Activated CD8-positive, alpha-beta T cell treated with anti-CD3 and anti-CD28 coated beads, Interleukin-2, amount 10 ng/mL, durations not matched to agents 7 days and 5 days (primary cell): ENCODE measurements at regions of chr17 and their contacts with region 1.

Region 1: GRCh38 chr17:6651357-6651918 is at the starts of genes C17orf100 and MED31:
- DNase-seq: peak; percentile 96
- ATAC-seq: peak; percentile 93
- H3K4me3 Mint-ChIP-seq: peak within 1 kb of the TSS; percentile 97
- H3K27ac Mint-ChIP-seq: peak within 1 kb of the TSS; percentile 98
- H3K4me1 Mint-ChIP-seq: peaks cover 54% of the 10 kb centered on the region
- H3K27me3 Mint-ChIP-seq: peaks cover 21% of the 10 kb centered on the region
- total RNA-seq, gene C17orf100: 0.92 to 1.5 TPM
- total RNA-seq, gene MED31: 16.9 to 20.2 TPM

Region 2: GRCh38 chr17:6473128-6473767 is 178.2 kb before region 1 on chr17:
- CTCF ChIA-PET with region 1: interaction called, 24 read pairs
- POLR2A ChIA-PET with region 1: interaction called, 5 read pairs
- DNase-seq: peak; percentile 75
- ATAC-seq: peak; percentile 80
- H3K4me3 Mint-ChIP-seq: no peak overlapping the region
- H3K27ac Mint-ChIP-seq: no peak overlapping the region
- H3K4me1 Mint-ChIP-seq: no peaks in the 10 kb centered on the region
- H3K27me3 Mint-ChIP-seq: no peaks in the 10 kb centered on the region

Region 3: DNA sequence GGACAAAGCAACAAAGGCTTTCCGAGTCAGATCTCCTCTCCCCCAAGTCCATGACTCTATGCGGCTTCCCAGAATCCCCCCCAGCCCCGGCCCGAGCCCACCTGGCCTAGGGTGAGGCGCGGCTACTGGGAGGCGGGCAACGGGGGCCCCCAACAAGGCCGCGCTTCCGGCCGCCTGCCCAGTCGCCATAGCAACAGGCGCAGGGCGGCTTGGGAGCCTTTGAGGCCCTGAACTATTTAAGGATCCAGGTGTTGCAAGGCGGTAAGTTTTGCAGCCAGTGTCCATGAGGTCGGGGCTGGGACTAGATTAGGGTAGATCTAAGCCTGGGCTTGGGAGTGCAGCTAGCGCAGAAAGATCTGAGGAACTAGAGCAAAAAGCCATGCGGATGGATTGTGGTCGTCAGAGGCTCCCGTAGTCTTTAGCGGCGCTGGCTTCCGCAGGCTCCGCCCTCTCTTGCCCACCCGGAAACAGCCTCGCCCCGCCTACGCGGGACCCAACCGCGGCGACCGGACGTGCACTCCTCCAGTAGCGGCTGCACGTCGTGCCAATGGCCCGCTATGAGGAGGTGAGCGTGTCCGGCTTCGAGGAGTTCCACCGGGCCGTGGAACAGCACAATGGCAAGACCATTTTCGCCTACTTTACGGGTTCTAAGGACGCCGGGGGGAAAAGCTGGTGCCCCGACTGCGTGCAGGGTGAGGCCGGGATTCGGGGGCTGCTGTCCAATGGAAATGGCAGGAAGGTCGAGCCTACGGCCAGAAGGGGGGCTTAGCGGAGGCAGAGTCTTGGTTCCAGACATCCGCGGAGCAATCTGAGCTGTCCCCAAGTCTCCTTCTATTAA is 10.7 kb before region 1 on chr17 and contains the starts of genes KIAA0753 and TXNDC17:
- CTCF ChIA-PET with region 1: interaction called, 11 read pairs
- POLR2A ChIA-PET with region 1: interaction called, 36 read pairs
- DNase-seq: peak; percentile 95
- ATAC-seq: peak; percentile 86
- H3K4me3 Mint-ChIP-seq: peak within 1 kb of the TSS; percentile 94
- H3K27ac Mint-ChIP-seq: peak within 1 kb of the TSS; percentile 98
- H3K4me1 Mint-ChIP-seq: peaks cover 61% of the 10 kb centered on the region
- H3K27me3 Mint-ChIP-seq: no peaks in the 10 kb centered on the region
- total RNA-seq, gene KIAA0753: 14.0 to 19.5 TPM
- total RNA-seq, gene TXNDC17: 81.8 to 94.7 TPM

Region 4: DNA sequence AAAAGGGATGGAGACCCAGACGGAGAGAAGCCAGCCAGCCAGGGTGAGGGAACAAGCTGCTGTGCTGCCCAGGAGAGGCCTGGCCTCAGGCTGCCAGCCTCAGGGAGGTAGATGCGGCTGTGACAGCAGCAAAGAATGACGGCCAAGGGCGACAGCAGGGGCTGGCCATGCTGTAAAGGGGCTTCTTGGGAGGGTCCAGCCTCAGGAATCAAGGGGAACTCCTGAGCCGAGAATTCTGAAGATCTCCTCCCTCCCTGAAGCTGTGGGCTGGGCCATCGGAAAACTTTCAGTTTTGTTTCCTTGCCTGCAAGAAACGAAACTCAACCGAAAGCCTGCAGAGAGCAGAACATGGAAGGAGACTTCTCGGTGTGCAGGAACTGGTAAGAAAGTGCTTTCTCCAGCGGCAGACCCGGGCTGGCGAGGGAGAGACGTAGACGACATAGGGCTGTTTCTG is 104.3 kb after region 1 on chr17 and contains the start of gene XAF1:
- CTCF ChIA-PET with region 1: no interaction called
- POLR2A ChIA-PET with region 1: interaction called, 15 read pairs
- DNase-seq: peak; percentile 81
- ATAC-seq: peak; percentile 78
- H3K4me3 Mint-ChIP-seq: peak within 1 kb of the TSS; percentile 93
- H3K27ac Mint-ChIP-seq: peak within 1 kb of the TSS; percentile 96
- H3K4me1 Mint-ChIP-seq: peaks cover 65% of the 10 kb centered on the region
- H3K27me3 Mint-ChIP-seq: no peaks in the 10 kb centered on the region
- total RNA-seq, gene XAF1: 298 to 306 TPM

Region 5: DNA sequence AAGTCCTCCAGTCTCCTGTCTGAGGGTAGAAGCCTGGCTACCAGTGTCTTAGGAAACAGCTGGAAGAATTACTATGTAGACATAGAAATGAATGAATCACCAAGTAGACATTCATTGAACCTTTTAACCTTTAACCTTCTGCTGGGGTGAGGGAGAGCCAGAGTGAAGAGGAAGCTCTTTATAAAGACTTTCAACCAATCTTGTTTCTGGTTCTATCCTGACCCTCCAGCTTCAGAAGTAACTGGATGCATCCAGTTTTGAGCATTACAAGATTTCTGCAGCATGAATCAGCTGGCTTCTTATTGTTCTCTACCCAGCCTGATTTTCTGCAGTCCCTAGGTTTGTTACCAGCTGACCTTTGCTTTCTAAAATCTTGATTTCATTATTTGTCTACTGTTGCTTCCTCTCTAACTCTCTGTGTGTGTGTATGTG is 171.6 kb after region 1 on chr17:
- CTCF ChIA-PET with region 1: no interaction called
- POLR2A ChIA-PET with region 1: no interaction called
- DNase-seq: no peak
- ATAC-seq: no peak
- H3K4me3 Mint-ChIP-seq: no peak overlapping the region
- H3K27ac Mint-ChIP-seq: no peak overlapping the region
- H3K4me1 Mint-ChIP-seq: no peaks in the 10 kb centered on the region
- H3K27me3 Mint-ChIP-seq: peaks cover 33% of the 10 kb centered on the region